ENCODE measurements at regions of chr18 and their contacts with region 1.

Region 1: DNA sequence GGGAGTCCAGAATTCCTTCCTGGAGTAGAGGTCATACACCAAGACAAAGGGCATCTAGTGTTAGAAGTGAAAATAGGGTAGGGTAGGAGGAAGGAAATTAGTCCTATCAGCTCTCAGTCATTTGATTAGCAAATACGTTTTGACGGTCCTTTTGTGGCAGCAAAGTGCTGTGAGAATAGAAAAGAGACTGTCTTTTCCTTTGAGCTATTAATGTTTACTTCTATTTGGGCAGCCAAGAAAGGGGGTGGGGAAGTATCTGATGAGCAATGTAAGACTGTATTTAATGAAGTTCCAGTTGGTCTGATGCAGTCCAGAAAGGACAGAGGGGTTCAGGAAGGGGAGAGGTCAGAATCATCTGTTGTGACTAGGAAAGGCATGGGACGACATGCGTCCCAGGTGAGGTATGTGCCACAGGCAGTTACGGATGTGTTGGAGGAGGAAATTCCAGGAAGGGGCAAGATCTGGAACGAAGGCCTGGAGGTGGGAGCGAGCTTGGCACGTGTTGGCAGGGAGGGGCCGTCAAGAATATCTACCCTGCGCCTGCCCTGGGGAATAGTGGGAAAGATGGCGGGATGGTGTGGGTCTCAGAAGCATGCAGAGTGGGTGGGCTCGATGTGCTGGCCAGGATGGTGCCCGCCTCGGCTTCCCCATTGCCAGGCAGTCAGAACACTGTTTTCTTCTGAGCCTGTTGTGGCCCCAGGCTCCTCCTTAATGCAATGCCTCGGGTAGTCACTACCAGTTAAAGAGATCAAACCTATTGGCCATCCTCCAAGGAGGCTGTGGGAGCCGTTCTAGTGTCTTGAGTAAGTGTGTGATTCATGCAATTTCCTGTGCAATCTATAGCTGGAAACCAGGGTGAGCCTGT is 57.9 kb upstream of the TXNDC2 start:
- DNase-seq: peak; percentile 92 to 99 (median 96)
- H3K4me3 ChIP-seq: peak overlapping the region in 1 of 3 experiments; percentile 54
- H3K4me3 Mint-ChIP-seq: peak overlapping the region; percentile 64 to 85
- H3K27ac ChIP-seq: peak overlapping the region; percentile 94 to 97
- H3K27ac Mint-ChIP-seq: no peak overlapping the region
- H3K4me1 ChIP-seq: peaks cover 67 to 68% of the 10 kb centered on the region in 2 donors
- H3K4me1 Mint-ChIP-seq: peaks cover 23% of the 10 kb centered on the region
- H3K27me3 ChIP-seq: no peaks in the 10 kb centered on the region
- H3K27me3 Mint-ChIP-seq: no peaks in the 10 kb centered on the region
- CTCF ChIP-seq: no peak

Region 2: DNA sequence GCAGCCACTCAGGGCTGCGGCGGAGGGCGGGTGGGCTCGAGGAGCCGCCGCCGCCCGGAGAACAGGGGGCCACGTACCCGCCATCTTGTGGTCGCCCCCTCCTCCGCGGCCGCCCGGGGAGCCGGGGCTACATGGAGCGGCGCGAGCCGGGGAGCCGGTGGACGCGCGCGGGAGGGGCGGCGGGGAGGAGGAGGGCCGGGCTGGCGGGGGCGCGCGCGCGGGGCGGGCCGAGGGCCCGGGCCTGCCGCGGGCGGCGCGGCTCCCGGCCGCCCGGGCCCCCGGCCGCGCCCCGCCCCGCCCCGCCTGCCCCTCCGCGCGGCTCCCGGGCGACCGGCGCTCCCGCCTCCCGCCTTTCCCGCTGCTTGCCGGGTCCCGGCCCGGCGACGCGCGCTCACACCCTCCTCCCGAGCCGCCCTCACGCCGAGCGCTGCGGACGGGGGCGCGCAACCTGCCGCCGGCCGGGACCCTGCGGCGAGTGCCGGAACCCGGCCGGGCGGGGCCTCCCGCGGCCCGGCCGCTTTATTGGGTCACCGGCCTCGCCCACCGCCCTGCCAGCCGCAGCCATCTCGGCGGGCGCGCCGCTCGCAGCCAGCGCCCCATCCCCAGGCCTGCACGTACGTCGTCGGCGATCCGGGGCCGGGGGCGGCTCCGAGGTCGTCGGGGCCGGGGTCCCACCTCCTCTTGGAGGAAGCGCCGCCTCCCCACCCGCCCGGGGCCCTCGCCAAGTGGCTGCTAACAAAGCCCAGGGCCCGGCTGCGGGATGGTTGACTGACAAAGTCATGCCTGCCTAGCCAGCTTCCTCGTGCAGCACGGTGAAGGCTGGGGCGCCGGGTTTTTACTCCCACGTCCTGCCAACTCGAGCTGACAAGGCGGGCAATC is 213.2 kb before region 1 on chr18 and contains the start of gene PPP4R1:
- intact Hi-C with region 1: loop called in 1 of 2 experiments (anchors 10 kb)
- DNase-seq: peak; percentile 45 to 56 (median 55)
- H3K4me3 ChIP-seq: peak within 1 kb of the TSS; percentile 58 to 78 (median 60)
- H3K4me3 Mint-ChIP-seq: peak within 1 kb of the TSS; percentile 96 to 99
- H3K27ac ChIP-seq: peak within 1 kb of the TSS; percentile 76 to 86
- H3K27ac Mint-ChIP-seq: peak within 1 kb of the TSS; percentile 89 to 97 (median 94)
- H3K4me1 ChIP-seq: peaks cover 27 to 39% of the 10 kb centered on the region in 2 donors
- H3K4me1 Mint-ChIP-seq: peaks cover 43% of the 10 kb centered on the region
- H3K27me3 ChIP-seq: no peaks in the 10 kb centered on the region
- H3K27me3 Mint-ChIP-seq: no peaks in the 10 kb centered on the region
- CTCF ChIP-seq: no peak
- polyA plus RNA-seq, gene PPP4R1: 22.0 to 45.3 (median 24.6) TPM

Region 3: DNA sequence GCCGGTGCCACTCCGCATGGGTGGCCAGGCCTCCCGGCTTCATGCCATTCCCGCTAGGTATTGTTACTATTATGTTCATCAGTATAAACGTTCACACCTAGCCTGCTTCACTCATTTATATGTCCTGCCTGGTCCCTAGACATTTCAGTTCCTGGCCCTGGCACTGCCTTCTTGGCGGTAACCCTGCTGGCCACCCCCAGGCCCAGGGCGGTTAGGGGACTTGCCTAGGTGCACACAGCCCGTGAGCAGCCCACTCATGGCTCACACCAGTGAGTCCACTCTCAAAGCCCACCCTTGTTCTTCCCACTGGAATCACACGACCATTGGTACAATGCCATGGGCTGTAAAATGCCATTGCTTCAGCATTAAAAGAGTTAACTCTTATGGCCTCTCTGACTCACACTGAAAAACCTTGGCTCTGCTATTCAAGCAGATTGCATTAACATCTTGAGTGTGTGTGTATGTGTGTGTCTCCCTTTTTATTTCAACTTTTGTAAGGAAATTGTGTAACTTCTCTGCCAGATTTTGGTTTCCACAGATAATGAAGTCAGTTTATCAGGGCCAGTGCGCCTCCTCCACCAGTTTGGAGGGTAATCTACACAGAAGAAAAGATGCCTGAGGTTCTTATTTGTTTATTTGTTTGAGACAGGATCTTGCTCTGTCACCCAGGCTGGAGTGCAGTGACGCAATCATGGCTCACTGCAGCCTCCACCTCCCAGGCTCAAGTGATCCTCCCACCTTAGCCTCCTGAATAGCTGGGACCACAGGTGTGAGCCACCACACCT is 45.6 kb before region 1 on chr18:
- intact Hi-C with region 1: loop called in 1 of 2 experiments (anchors 5 kb)
- DNase-seq: peak; percentile 80 to 91 (median 84)
- H3K4me3 ChIP-seq: peak overlapping the region in 1 of 3 experiments; percentile 14
- H3K4me3 Mint-ChIP-seq: no peak overlapping the region
- H3K27ac ChIP-seq: peak overlapping the region; percentile 79 to 86
- H3K27ac Mint-ChIP-seq: peak overlapping the region; percentile 89 to 96 (median 92)
- H3K4me1 ChIP-seq: peaks cover 50 to 68% of the 10 kb centered on the region in 2 donors
- H3K4me1 Mint-ChIP-seq: peaks cover 64% of the 10 kb centered on the region
- H3K27me3 ChIP-seq: no peaks in the 10 kb centered on the region
- H3K27me3 Mint-ChIP-seq: peaks cover 0 to 3% (median 0%) of the 10 kb centered on the region in 3 donors
- CTCF ChIP-seq: no peak

Region 4: GRCh38 chr18:9849407-9850281 is 21.8 kb after region 1 on chr18:
- intact Hi-C with region 1: loop called in 1 of 2 experiments (anchors 2 kb)
- DNase-seq: peak; percentile 83 to 86 (median 85)
- H3K4me3 ChIP-seq: peak overlapping the region in 1 of 3 experiments; percentile 29
- H3K4me3 Mint-ChIP-seq: peak overlapping the region; percentile 68 to 81
- H3K27ac ChIP-seq: peak overlapping the region; percentile 80 to 88
- H3K27ac Mint-ChIP-seq: peak overlapping the region; percentile 94 to 98 (median 97)
- H3K4me1 ChIP-seq: peaks cover 39 to 45% of the 10 kb centered on the region in 2 donors
- H3K4me1 Mint-ChIP-seq: peaks cover 61% of the 10 kb centered on the region
- H3K27me3 ChIP-seq: no peaks in the 10 kb centered on the region
- H3K27me3 Mint-ChIP-seq: peaks cover 0 to 5% (median 0%) of the 10 kb centered on the region in 3 donors
- CTCF ChIP-seq: no peak

Region 5: GRCh38 chr18:9913526-9914333 is 85.9 kb after region 1 on chr18 and contains the start of gene VAPA:
- intact Hi-C with region 1: loop called in 1 of 2 experiments (anchors 2 kb)
- DNase-seq: peak; percentile 95 to 99 (median 97)
- H3K4me3 ChIP-seq: peak within 1 kb of the TSS; percentile 87 to 98 (median 95)
- H3K4me3 Mint-ChIP-seq: peak within 1 kb of the TSS; percentile 83 to 95
- H3K27ac ChIP-seq: peak within 1 kb of the TSS; percentile 80 to 97
- H3K27ac Mint-ChIP-seq: peak within 1 kb of the TSS; percentile 91 to 98 (median 97)
- H3K4me1 ChIP-seq: peaks cover 36 to 62% of the 10 kb centered on the region in 2 donors
- H3K4me1 Mint-ChIP-seq: peaks cover 41% of the 10 kb centered on the region
- H3K27me3 ChIP-seq: no peaks in the 10 kb centered on the region
- H3K27me3 Mint-ChIP-seq: no peaks in the 10 kb centered on the region
- CTCF ChIP-seq: no peak
- polyA plus RNA-seq, gene VAPA: 106 to 393 (median 334) TPM